Naive thymus-derived CD4-positive, alpha-beta T cell (primary cell): ENCODE measurements at regions of chr3 and their contacts with region 1.

Region 1: DNA sequence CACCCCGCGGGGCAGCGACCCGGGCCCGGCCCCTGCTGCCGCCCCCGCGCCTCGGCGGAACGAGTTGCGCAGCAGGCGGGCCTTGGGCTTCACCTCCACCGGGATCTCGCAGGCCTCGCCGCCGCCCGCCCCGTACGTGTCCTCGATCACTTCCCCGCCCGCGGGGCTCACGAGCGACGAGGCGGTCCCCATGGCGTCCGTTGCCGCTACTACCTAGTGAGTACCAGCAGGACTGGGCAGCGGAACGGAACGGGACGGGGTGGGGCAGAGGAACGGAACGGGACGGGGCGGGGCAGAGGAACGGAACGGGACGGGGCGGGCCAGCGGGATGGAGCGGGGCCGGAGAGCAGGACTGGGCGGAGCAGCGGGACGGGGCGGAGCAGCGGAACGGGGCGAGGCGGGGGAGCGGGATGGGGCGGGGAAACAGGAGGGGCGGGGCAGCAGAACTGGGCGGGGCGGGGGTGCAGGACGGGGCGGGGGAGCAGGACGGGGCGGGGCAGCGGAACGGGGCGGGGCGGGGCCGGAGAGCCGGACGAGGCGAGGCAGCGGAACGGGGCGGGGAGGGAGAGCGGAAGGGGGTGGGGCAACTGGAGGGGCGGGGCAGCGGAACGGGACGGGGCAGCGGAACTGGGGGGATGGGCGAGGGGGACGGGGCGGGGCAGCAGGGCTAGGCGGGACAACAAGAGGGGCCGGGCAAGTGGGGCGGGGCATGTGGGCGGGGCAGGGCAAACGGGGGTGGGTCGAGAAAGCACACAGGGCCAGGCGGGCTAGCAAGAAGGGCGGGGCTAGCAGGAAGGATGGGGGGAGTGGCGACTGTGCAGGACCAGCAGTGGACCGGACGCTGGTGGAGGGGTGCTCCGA is at the start of gene NPHP3:
- DNase-seq: peak; percentile 75 to 95 (median 87)
- ATAC-seq: peak; percentile 87
- H3K4me3 ChIP-seq: peak within 1 kb of the TSS; percentile 88
- H3K4me3 Mint-ChIP-seq: peak within 1 kb of the TSS; percentile 86 to 95 (median 92)
- H3K27ac ChIP-seq: peak within 1 kb of the TSS; percentile 85
- H3K27ac Mint-ChIP-seq: peak within 1 kb of the TSS; percentile 84 to 95 (median 89)
- H3K4me1 ChIP-seq: peaks cover 16 to 26% of the 10 kb centered on the region in 2 donors
- H3K4me1 Mint-ChIP-seq: peaks cover 17 to 49% (median 43%) of the 10 kb centered on the region in 7 donors
- H3K27me3 ChIP-seq: no peaks in the 10 kb centered on the region
- H3K27me3 Mint-ChIP-seq: peaks cover 0 to 6% (median 0%) of the 10 kb centered on the region in 5 donors
- total RNA-seq, gene NPHP3: 21.8 to 78.9 (median 26.1) TPM

Region 2: DNA sequence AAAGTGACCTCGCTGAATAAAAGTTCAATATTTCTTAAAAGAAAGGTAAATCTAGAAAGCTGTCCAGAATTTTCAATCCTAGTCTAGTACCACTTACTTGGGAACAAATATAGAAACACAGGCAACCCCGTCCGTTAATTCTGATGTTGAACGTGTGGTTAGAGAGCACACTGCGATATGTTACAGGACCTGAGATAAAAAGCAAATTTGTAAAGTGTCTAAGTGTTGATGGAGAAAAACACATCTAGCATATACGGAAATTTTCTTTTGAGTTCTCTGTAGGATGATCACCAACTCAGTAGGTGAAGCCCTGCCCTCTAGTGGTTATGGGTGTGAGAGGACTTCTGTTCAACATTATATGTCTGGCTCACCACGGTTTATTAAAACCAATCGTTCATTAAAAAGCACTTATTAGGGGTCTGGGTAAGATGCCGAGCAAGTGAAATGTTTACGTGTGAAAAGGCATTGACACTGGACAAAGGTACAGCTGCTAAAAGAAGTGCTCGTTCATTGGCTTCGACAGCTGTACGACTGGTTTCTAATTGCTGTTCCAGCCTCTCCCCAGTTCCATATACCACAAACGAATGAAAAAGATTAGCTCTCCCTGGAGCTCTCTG is 1829.5 kb before region 1 on chr3:
- CTCF ChIA-PET with region 1: no interaction called
- POLR2A ChIA-PET with region 1: no interaction called
- intact Hi-C with region 1: loop called in 1 of 2 experiments (anchors 1 kb)
- DNase-seq: peak in 8 of 9 donors; percentile 55 to 82 (median 76)
- ATAC-seq: peak; percentile 77
- H3K4me3 ChIP-seq: peak overlapping the region; percentile 96
- H3K4me3 Mint-ChIP-seq: peak overlapping the region; percentile 94 to 99 (median 98)
- H3K27ac ChIP-seq: peak overlapping the region; percentile 93
- H3K27ac Mint-ChIP-seq: peak overlapping the region; percentile 95 to 100 (median 99)
- H3K4me1 ChIP-seq: peaks cover 5 to 14% of the 10 kb centered on the region in 2 donors
- H3K4me1 Mint-ChIP-seq: peaks cover 25 to 45% (median 37%) of the 10 kb centered on the region in 7 donors
- H3K27me3 ChIP-seq: no peaks in the 10 kb centered on the region
- H3K27me3 Mint-ChIP-seq: peaks cover 0 to 4% (median 0%) of the 10 kb centered on the region in 5 donors

Region 3: GRCh38 chr3:132180337-132180791 is 542.0 kb before region 1 on chr3:
- CTCF ChIA-PET with region 1: no interaction called
- POLR2A ChIA-PET with region 1: no interaction called
- intact Hi-C with region 1: no loop called
- DNase-seq: peak in 6 of 9 donors; percentile 8 to 33 (median 18)
- ATAC-seq: peak; percentile 58
- H3K4me3 ChIP-seq: no peak overlapping the region
- H3K4me3 Mint-ChIP-seq: peak overlapping the region in 2 of 10 donors; percentile 3 to 27
- H3K27ac ChIP-seq: no peak overlapping the region
- H3K27ac Mint-ChIP-seq: no peak overlapping the region
- H3K4me1 ChIP-seq: no peaks in the 10 kb centered on the region
- H3K4me1 Mint-ChIP-seq: peaks cover 0 to 6% (median 4%) of the 10 kb centered on the region in 7 donors
- H3K27me3 ChIP-seq: no peaks in the 10 kb centered on the region
- H3K27me3 Mint-ChIP-seq: peaks cover 2 to 20% (median 7%) of the 10 kb centered on the region in 5 donors

Region 4: GRCh38 chr3:132416807-132417694 is 305.3 kb before region 1 on chr3 and contains the start of gene DNAJC13:
- CTCF ChIA-PET with region 1: no interaction called
- POLR2A ChIA-PET with region 1: interaction called, 3 read pairs
- intact Hi-C with region 1: loop called (anchors 1 kb)
- DNase-seq: peak; percentile 80 to 93 (median 92)
- ATAC-seq: peak; percentile 97
- H3K4me3 ChIP-seq: peak within 1 kb of the TSS; percentile 94
- H3K4me3 Mint-ChIP-seq: peak within 1 kb of the TSS; percentile 97 to 100 (median 99)
- H3K27ac ChIP-seq: peak within 1 kb of the TSS; percentile 82
- H3K27ac Mint-ChIP-seq: peak within 1 kb of the TSS; percentile 93 to 99 (median 98)
- H3K4me1 ChIP-seq: peaks cover 7 to 11% of the 10 kb centered on the region in 2 donors
- H3K4me1 Mint-ChIP-seq: peaks cover 12 to 40% (median 33%) of the 10 kb centered on the region in 7 donors
- H3K27me3 ChIP-seq: no peaks in the 10 kb centered on the region
- H3K27me3 Mint-ChIP-seq: peaks cover 0 to 4% (median 0%) of the 10 kb centered on the region in 5 donors
- total RNA-seq, gene DNAJC13: 23.6 to 41.5 (median 37.5) TPM

Region 5: GRCh38 chr3:132695422-132695821 is 27.0 kb before region 1 on chr3:
- CTCF ChIA-PET with region 1: no interaction called
- POLR2A ChIA-PET with region 1: no interaction called
- intact Hi-C with region 1: no loop called
- DNase-seq: no peak
- ATAC-seq: no peak
- H3K4me3 ChIP-seq: no peak overlapping the region
- H3K4me3 Mint-ChIP-seq: no peak overlapping the region
- H3K27ac ChIP-seq: no peak overlapping the region
- H3K27ac Mint-ChIP-seq: peak overlapping the region in 4 of 9 donors; percentile 18 to 32 (median 28)
- H3K4me1 ChIP-seq: no peaks in the 10 kb centered on the region
- H3K4me1 Mint-ChIP-seq: peaks cover 0 to 6% (median 3%) of the 10 kb centered on the region in 7 donors
- H3K27me3 ChIP-seq: no peaks in the 10 kb centered on the region
- H3K27me3 Mint-ChIP-seq: no peaks in the 10 kb centered on the region

Region 6: GRCh38 chr3:133426721-133427120 is 704.3 kb after region 1 on chr3:
- CTCF ChIA-PET with region 1: interaction called, 42 read pairs
- POLR2A ChIA-PET with region 1: interaction called, 3 read pairs
- intact Hi-C with region 1: loop called (anchors 1 kb)
- DNase-seq: no peak
- ATAC-seq: no peak
- H3K4me3 ChIP-seq: no peak overlapping the region
- H3K4me3 Mint-ChIP-seq: no peak overlapping the region
- H3K27ac ChIP-seq: no peak overlapping the region
- H3K27ac Mint-ChIP-seq: peak overlapping the region in 1 of 9 donors; percentile 8
- H3K4me1 ChIP-seq: peaks cover 0 to 3% of the 10 kb centered on the region in 2 donors
- H3K4me1 Mint-ChIP-seq: peaks cover 0 to 4% (median 0%) of the 10 kb centered on the region in 7 donors
- H3K27me3 ChIP-seq: no peaks in the 10 kb centered on the region
- H3K27me3 Mint-ChIP-seq: peaks cover 0 to 7% (median 0%) of the 10 kb centered on the region in 5 donors

Region 7: DNA sequence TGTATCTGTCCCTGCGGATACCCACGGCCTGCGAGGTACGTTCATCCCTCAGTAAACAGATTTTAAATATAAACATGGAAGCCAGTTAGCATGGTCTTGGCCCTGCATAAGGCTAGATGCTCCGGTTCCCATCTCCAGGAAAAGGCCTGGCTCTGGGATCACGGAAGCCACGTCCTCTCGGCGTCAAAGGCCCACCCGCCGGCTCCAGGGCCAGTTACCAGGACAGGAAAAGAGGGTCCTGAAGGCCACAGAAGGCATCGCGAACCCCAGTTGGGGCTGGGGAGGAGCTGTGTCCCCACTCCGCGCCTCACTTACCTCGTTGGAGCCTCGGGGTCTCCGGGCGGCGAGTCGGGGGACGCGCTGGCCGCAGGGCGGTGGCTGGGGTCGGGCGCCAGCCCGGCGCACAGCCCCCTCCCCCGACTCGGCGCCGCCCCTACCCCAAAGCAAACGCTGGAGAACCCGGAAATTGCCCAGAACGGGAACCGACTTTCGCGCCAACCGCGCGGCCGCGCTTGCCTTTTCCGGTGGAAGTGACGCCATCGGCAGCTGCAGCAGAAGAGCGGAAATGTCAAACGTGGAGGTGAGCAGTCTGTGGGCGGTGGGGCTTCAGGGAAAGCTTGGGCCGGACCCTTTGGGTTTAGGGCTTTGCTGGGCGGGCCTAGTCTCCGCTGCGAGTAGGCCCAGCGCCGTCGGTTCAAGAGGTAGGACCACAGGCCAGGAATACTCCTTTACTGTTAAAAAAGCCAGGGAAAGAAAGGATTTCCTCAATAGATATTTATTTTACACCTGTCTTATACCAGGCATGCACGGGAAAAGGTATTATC is 939.3 kb after region 1 on chr3 and contains the start of gene TOPBP1:
- CTCF ChIA-PET with region 1: no interaction called
- POLR2A ChIA-PET with region 1: no interaction called
- intact Hi-C with region 1: loop called (anchors 1 kb)
- DNase-seq: peak; percentile 68 to 88 (median 85)
- ATAC-seq: peak; percentile 90
- H3K4me3 ChIP-seq: peak within 1 kb of the TSS; percentile 80
- H3K4me3 Mint-ChIP-seq: peak within 1 kb of the TSS; percentile 90 to 99 (median 97)
- H3K27ac ChIP-seq: peak within 1 kb of the TSS; percentile 79
- H3K27ac Mint-ChIP-seq: peak within 1 kb of the TSS; percentile 93 to 99 (median 97)
- H3K4me1 ChIP-seq: peaks cover 8 to 25% of the 10 kb centered on the region in 2 donors
- H3K4me1 Mint-ChIP-seq: peaks cover 30 to 53% (median 46%) of the 10 kb centered on the region in 7 donors
- H3K27me3 ChIP-seq: no peaks in the 10 kb centered on the region
- H3K27me3 Mint-ChIP-seq: no peaks in the 10 kb centered on the region
- total RNA-seq, gene TOPBP1: 26.3 to 73.8 (median 37.6) TPM

Region 8: DNA sequence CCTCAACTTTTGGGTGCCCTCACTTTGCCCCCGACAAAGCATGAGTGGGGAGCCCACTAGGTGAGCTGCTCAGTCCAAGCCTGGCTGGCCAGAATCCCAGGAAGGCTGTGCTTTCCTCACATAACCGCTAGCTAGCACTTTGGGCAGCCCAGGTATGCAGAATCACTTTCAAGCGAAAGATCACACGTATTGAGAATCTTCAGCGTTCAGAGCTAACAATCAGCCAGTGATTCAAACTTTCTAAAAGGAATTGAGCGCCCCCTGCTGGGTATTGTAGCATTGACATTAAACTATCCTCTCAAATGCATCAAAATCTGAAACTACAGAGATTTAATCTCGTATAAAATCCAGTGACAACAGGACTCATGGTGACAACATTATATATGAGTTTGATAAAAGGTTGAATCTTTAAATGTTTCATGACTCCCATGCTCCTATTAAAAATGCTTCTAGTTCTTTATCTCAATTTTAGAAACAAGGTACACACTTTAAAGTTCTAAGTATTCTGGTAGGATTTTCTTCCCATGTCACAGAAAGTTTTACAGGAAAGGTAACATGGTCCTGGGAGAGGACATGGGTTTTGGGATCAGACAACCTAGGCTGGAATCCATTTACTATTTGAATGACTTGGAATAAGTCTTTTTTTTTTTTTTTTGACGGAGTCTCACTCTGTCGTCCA is 1751.6 kb after region 1 on chr3:
- CTCF ChIA-PET with region 1: no interaction called
- POLR2A ChIA-PET with region 1: no interaction called
- intact Hi-C with region 1: loop called in 1 of 2 experiments (anchors 2 kb)
- DNase-seq: peak; percentile 50 to 81 (median 74)
- ATAC-seq: peak; percentile 89
- H3K4me3 ChIP-seq: no peak overlapping the region
- H3K4me3 Mint-ChIP-seq: no peak overlapping the region
- H3K27ac ChIP-seq: no peak overlapping the region
- H3K27ac Mint-ChIP-seq: peak overlapping the region in 1 of 9 donors; percentile 32
- H3K4me1 ChIP-seq: no peaks in the 10 kb centered on the region
- H3K4me1 Mint-ChIP-seq: peaks cover 0 to 9% (median 0%) of the 10 kb centered on the region in 7 donors
- H3K27me3 ChIP-seq: no peaks in the 10 kb centered on the region
- H3K27me3 Mint-ChIP-seq: no peaks in the 10 kb centered on the region